B cell (primary cell): ENCODE measurements at regions of chr2 and their contacts with region 1.

Region 1: GRCh38 chr2:54606393-54606969 is 117.0 kb upstream of the EML6 start:
- DNase-seq: no peak
- ATAC-seq: no peak
- H3K4me3 ChIP-seq: no peak overlapping the region
- H3K4me3 Mint-ChIP-seq: no peak overlapping the region
- H3K27ac ChIP-seq: no peak overlapping the region
- H3K27ac Mint-ChIP-seq: no peak overlapping the region
- H3K4me1 ChIP-seq: peaks cover 53 to 64% of the 10 kb centered on the region in 2 donors
- H3K4me1 Mint-ChIP-seq: peaks cover 82% of the 10 kb centered on the region
- H3K27me3 ChIP-seq: no peaks in the 10 kb centered on the region
- H3K27me3 Mint-ChIP-seq: no peaks in the 10 kb centered on the region
- CTCF ChIP-seq: no peak

Region 2: GRCh38 chr2:54641988-54642387 is 35.5 kb after region 1 on chr2:
- CTCF ChIA-PET with region 1: no interaction called
- POLR2A ChIA-PET with region 1: no interaction called
- intact Hi-C with region 1: loop called (anchors 1 kb)
- DNase-seq: no peak
- ATAC-seq: no peak
- H3K4me3 ChIP-seq: no peak overlapping the region
- H3K4me3 Mint-ChIP-seq: no peak overlapping the region
- H3K27ac ChIP-seq: no peak overlapping the region
- H3K27ac Mint-ChIP-seq: peak overlapping the region; percentile 32
- H3K4me1 ChIP-seq: peaks cover 14 to 21% of the 10 kb centered on the region in 2 donors
- H3K4me1 Mint-ChIP-seq: peaks cover 22% of the 10 kb centered on the region
- H3K27me3 ChIP-seq: no peaks in the 10 kb centered on the region
- H3K27me3 Mint-ChIP-seq: no peaks in the 10 kb centered on the region
- CTCF ChIP-seq: no peak